ENCODE measurements at regions of chr5 and their contacts with region 1.

Region 1: GRCh38 chr5:96614110-96614691 is 48.0 kb upstream of the CAST start:
- DNase-seq: peak; percentile 64 to 84
- H3K4me3 ChIP-seq: peak overlapping the region; percentile 31; the same call in 1 of the 2 replicates
- H3K27ac ChIP-seq: peak overlapping the region; percentile 60
- H3K4me1 ChIP-seq: peaks cover 24% of the 10 kb centered on the region
- H3K27me3 ChIP-seq: no peaks in the 10 kb centered on the region
- CTCF ChIP-seq: peak; percentile 82

Region 2: GRCh38 chr5:96629774-96630173 is 15.6 kb after region 1 on chr5:
- CTCF ChIA-PET with region 1: no interaction called
- POLR2A ChIA-PET with region 1: no interaction called
- intact Hi-C with region 1: loop called (anchors 2 kb)
- DNase-seq: peak; percentile 62 to 92
- H3K4me3 ChIP-seq: no peak overlapping the region
- H3K27ac ChIP-seq: peak overlapping the region; percentile 61
- H3K4me1 ChIP-seq: peaks cover 33% of the 10 kb centered on the region
- H3K27me3 ChIP-seq: no peaks in the 10 kb centered on the region
- CTCF ChIP-seq: no peak

Region 3: DNA sequence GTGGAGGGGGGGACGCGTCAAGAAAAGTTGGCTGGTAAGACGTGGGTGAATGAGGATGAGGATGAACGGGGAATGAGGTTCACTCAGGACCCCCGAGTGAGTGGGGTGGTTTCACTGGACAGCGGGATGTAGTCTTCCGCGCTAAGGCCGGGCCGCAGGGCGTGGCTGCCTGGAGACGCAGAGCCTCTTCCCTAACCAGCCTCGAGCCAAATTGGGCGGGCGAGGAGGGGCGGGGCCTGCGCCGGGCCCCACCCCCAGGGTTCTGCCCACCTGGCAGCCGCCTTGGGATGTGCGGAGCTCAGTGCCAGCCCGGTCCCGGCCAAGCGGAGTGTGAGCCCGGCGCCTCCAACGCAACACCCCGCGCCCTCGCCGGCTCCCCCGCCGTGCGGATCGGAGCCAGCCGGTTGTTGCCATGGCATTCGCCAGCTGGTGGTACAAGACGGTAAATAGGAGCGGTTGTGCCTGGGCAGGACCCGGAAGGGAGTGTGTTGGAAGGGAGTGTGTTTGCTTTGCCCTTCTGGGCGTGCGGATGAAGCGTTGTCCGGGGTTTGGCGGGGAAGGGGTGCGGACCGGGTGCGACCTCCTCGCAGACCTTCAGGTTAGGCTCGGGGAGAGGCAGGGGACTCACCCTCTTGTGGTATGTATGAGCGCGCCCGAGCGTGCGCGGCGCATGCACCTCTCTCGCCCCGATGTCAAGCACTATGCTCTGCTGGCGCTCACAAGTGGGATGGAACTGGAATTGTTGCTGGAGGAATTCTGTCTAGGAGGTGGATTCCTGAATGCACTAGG is 48.7 kb after region 1 on chr5:
- CTCF ChIA-PET with region 1: no interaction called
- POLR2A ChIA-PET with region 1: interaction called, 17 read pairs
- intact Hi-C with region 1: loop called (anchors 1 kb)
- DNase-seq: peak; percentile 86 to 96
- H3K4me3 ChIP-seq: peak overlapping the region; percentile 88
- H3K27ac ChIP-seq: peak overlapping the region; percentile 94
- H3K4me1 ChIP-seq: peaks cover 53% of the 10 kb centered on the region
- H3K27me3 ChIP-seq: no peaks in the 10 kb centered on the region
- CTCF ChIP-seq: no peak

Region 4: GRCh38 chr5:96709152-96709821 is 95.1 kb after region 1 on chr5:
- CTCF ChIA-PET with region 1: no interaction called
- POLR2A ChIA-PET with region 1: interaction called, 13 read pairs
- intact Hi-C with region 1: loop called (anchors 5 kb)
- DNase-seq: no peak
- H3K4me3 ChIP-seq: no peak overlapping the region
- H3K27ac ChIP-seq: peak overlapping the region; percentile 57
- H3K4me1 ChIP-seq: peaks cover 57% of the 10 kb centered on the region
- H3K27me3 ChIP-seq: no peaks in the 10 kb centered on the region
- CTCF ChIP-seq: no peak

Region 5: DNA sequence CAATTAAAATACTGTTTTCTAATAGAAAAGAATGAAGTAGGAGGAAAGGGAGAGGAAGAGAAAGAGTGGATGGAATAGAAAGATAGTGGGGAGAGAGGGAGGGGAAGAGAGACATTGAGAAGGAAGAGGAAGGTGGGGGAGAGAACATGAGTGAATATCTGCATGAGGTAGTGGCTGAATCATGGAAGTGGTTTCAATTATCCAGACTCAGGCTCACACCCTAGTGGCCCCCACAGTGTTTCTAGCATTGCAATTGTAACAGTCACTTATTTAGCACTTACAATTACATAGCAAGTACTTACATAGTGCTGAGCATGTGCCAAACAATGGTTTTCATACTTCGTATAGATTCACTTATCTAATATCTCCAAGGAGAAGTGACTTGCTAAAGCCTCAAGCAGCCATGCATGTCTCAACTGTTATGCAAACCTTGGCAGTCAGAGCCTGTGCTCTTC is 120.7 kb after region 1 on chr5:
- CTCF ChIA-PET with region 1: interaction called, 9 read pairs
- POLR2A ChIA-PET with region 1: no interaction called
- intact Hi-C with region 1: loop called (anchors 2 kb)
- DNase-seq: no peak
- H3K4me3 ChIP-seq: peak overlapping the region; percentile 14; the same call in 1 of the 2 replicates
- H3K27ac ChIP-seq: peak overlapping the region; percentile 61
- H3K4me1 ChIP-seq: peaks cover 38% of the 10 kb centered on the region
- H3K27me3 ChIP-seq: no peaks in the 10 kb centered on the region
- CTCF ChIP-seq: no peak

Region 6: GRCh38 chr5:96934708-96935558 is 320.7 kb after region 1 on chr5:
- CTCF ChIA-PET with region 1: no interaction called
- POLR2A ChIA-PET with region 1: no interaction called
- intact Hi-C with region 1: loop called (anchors 5 kb)
- DNase-seq: peak; percentile 87 to 97
- H3K4me3 ChIP-seq: peak overlapping the region; percentile 94
- H3K27ac ChIP-seq: peak overlapping the region; percentile 80
- H3K4me1 ChIP-seq: peaks cover 31% of the 10 kb centered on the region
- H3K27me3 ChIP-seq: no peaks in the 10 kb centered on the region
- CTCF ChIP-seq: no peak; the same call in 1 of the 2 replicates

Region 7: GRCh38 chr5:97162045-97162444 is 547.8 kb after region 1 on chr5:
- CTCF ChIA-PET with region 1: no interaction called
- POLR2A ChIA-PET with region 1: interaction called, 5 read pairs
- intact Hi-C with region 1: loop called (anchors 1 kb)
- DNase-seq: peak; percentile 53 to 60
- H3K4me3 ChIP-seq: no peak overlapping the region
- H3K27ac ChIP-seq: no peak overlapping the region
- H3K4me1 ChIP-seq: no peaks in the 10 kb centered on the region
- H3K27me3 ChIP-seq: no peaks in the 10 kb centered on the region
- CTCF ChIP-seq: peak; percentile 89